A673 (cell line): ENCODE measurements at regions of chr13 and their contacts with region 1.

Region 1: DNA sequence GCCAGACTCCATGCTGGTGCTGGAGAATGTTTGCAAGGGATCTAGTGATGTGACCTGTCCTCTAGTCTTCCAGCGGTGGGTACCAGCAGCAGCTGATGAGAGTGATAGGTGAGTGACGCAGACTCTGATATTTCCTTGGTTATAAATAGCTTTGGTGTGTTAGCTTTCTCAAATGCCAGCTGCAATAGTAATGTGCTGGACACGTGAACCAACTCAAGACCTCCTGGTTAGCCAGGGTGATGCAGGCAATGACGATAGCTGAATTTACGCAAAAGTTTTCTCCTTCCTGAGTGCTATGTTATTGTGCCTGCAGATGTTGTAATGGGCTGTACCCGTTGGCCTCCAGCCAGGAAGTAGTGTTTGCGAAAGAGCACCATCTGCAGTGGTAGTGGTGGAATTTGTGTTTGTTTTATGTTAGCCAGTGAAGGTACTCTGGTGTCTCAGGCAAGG is 129.5 kb downstream of the CYSLTR2 start:
- DNase-seq: peak; percentile 66
- H3K4me3 ChIP-seq: no peak overlapping the region
- H3K27ac ChIP-seq: no peak overlapping the region
- H3K4me1 ChIP-seq: no peaks in the 10 kb centered on the region
- H3K27me3 ChIP-seq: no peaks in the 10 kb centered on the region
- CTCF ChIP-seq: no peak

Region 2: GRCh38 chr13:49272296-49272695 is 489.1 kb after region 1 on chr13:
- CTCF ChIA-PET with region 1: no interaction called
- POLR2A ChIA-PET with region 1: no interaction called
- intact Hi-C with region 1: loop called (anchors 10 kb)
- DNase-seq: no peak
- H3K4me3 ChIP-seq: no peak overlapping the region
- H3K27ac ChIP-seq: no peak overlapping the region
- H3K4me1 ChIP-seq: no peaks in the 10 kb centered on the region
- H3K27me3 ChIP-seq: no peaks in the 10 kb centered on the region
- CTCF ChIP-seq: no peak